ENCODE measurements at regions of chr7 and their contacts with region 1.

Region 1: GRCh38 chr7:5083311-5083711 is 37.7 kb downstream of the RBAK start:
- DNase-seq: no peak
- ATAC-seq: no peak

Region 2: GRCh38 chr7:4797858-4798705 is 285.2 kb before region 1 on chr7:
- intact Hi-C with region 1: loop called in 1 of 2 experiments (anchors 10 kb)
- DNase-seq: peak in 1 of 2 donors; percentile 58
- ATAC-seq: peak; percentile 78

Region 3: DNA sequence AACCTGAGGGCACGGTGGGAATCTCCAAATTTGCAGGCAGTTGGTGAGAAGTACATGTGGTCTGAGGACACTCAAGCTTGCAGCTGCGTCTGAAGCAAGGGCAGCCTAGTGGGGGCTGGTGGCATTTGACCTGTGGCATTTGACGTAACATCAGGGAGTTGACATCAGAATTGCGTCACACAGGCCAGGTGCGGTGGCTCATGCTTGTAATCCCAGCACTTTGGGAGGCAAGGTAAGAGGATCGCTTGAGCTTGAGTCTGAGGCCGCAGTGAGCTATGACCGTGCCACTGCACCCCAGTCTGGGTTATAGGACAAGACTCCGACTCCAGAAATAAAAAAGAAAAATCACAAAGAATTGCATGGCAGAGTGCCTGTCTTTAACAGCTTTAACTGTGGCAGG is 63.2 kb before region 1 on chr7:
- intact Hi-C with region 1: no loop called
- DNase-seq: no peak
- ATAC-seq: no peak

Region 4: GRCh38 chr7:5036446-5036845 is 46.9 kb before region 1 on chr7:
- intact Hi-C with region 1: no loop called
- DNase-seq: no peak
- ATAC-seq: no peak

Region 5: GRCh38 chr7:5139998-5140397 is 56.7 kb after region 1 on chr7:
- intact Hi-C with region 1: no loop called
- DNase-seq: peak in 1 of 2 donors; percentile 44
- ATAC-seq: peak; percentile 63